ENCODE measurements at regions of chr4 and their contacts with region 1.

Region 1: GRCh38 chr4:21454831-21455230 is 493.7 kb downstream of the KCNIP4 start:
- DNase-seq: no peak
- ATAC-seq: no peak
- H3K4me3 ChIP-seq: no peak overlapping the region
- H3K4me3 Mint-ChIP-seq: no peak overlapping the region
- H3K27ac ChIP-seq: no peak overlapping the region
- H3K27ac Mint-ChIP-seq: no peak overlapping the region
- H3K4me1 ChIP-seq: no peaks in the 10 kb centered on the region
- H3K4me1 Mint-ChIP-seq: no peaks in the 10 kb centered on the region
- H3K27me3 ChIP-seq: no peaks in the 10 kb centered on the region
- H3K27me3 Mint-ChIP-seq: no peaks in the 10 kb centered on the region

Region 2: GRCh38 chr4:20992002-20992401 is 462.8 kb before region 1 on chr4:
- CTCF ChIA-PET with region 1: no interaction called
- POLR2A ChIA-PET with region 1: no interaction called
- DNase-seq: no peak
- ATAC-seq: no peak
- H3K4me3 ChIP-seq: no peak overlapping the region
- H3K4me3 Mint-ChIP-seq: no peak overlapping the region
- H3K27ac ChIP-seq: no peak overlapping the region
- H3K27ac Mint-ChIP-seq: no peak overlapping the region
- H3K4me1 ChIP-seq: no peaks in the 10 kb centered on the region
- H3K4me1 Mint-ChIP-seq: no peaks in the 10 kb centered on the region
- H3K27me3 ChIP-seq: no peaks in the 10 kb centered on the region
- H3K27me3 Mint-ChIP-seq: no peaks in the 10 kb centered on the region

Region 3: GRCh38 chr4:21476757-21477156 is 21.9 kb after region 1 on chr4:
- CTCF ChIA-PET with region 1: interaction called in 1 of 2 experiments, 10 read pairs
- POLR2A ChIA-PET with region 1: no interaction called
- DNase-seq: no peak
- ATAC-seq: no peak
- H3K4me3 ChIP-seq: no peak overlapping the region
- H3K4me3 Mint-ChIP-seq: no peak overlapping the region
- H3K27ac ChIP-seq: no peak overlapping the region
- H3K27ac Mint-ChIP-seq: no peak overlapping the region
- H3K4me1 ChIP-seq: no peaks in the 10 kb centered on the region
- H3K4me1 Mint-ChIP-seq: no peaks in the 10 kb centered on the region
- H3K27me3 ChIP-seq: no peaks in the 10 kb centered on the region
- H3K27me3 Mint-ChIP-seq: no peaks in the 10 kb centered on the region

Region 4: DNA sequence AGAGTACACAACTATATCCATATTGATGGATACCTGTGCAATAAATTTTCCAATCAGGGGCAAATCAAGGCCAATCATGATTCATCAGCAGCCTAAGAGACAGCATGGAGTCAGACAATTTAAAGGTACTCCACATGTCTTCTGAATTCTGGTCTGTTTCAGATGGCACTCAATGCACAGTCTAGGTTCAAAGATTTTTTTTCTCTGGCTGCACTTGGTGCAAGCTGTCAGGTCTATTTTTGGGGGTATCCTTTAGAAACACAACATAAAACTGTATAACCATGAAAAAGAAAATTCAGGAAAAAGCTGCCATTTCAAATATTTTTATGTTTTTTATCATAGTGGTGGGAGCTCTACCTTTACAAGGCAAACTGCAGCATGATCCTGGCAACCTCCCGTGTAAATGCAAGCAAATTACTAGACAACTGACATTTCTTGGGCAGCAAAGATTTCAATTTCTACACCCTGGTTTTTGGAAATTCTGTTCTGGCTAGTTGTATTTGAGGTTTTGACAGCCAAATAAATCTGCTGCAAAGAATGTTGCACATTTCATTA is 183.4 kb after region 1 on chr4:
- CTCF ChIA-PET with region 1: no interaction called
- POLR2A ChIA-PET with region 1: no interaction called
- DNase-seq: no peak
- ATAC-seq: no peak
- H3K4me3 ChIP-seq: no peak overlapping the region
- H3K4me3 Mint-ChIP-seq: no peak overlapping the region
- H3K27ac ChIP-seq: no peak overlapping the region
- H3K27ac Mint-ChIP-seq: no peak overlapping the region
- H3K4me1 ChIP-seq: no peaks in the 10 kb centered on the region
- H3K4me1 Mint-ChIP-seq: no peaks in the 10 kb centered on the region
- H3K27me3 ChIP-seq: no peaks in the 10 kb centered on the region
- H3K27me3 Mint-ChIP-seq: no peaks in the 10 kb centered on the region

Measured in T-cell (primary cell).